Sciatic nerve (tissue), 2 donors: ENCODE measurements at regions of chrX and their contacts with region 1.

Region 1: DNA sequence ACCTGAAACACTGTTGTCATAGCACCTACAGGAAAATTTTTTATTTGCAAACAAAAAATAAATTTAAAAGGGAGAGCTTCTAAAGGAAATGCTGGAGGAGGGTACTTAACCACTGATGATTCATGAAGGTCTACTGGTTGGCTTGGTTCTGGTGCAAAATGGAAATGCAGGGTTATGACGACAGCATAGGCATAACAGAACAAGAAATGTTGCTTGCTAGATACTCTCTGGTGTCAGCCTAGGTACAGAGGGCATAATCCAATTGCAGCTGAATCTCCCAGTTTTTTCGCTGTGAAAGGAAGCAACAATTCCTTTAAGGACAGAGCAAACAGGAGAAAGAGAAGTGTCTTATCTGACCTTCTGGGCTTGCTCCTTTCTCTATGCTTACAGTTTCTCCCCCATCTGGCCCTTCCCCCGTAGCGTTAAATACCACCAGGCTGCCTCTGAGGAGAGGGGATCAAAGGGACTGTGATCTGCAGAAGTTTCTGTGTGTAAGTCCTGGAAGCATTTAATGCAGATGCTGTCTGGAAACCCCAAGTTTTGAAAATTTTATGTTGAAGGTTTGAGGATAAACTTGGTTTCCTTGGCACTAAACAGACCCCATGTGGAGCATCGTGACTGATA is 23.7 kb upstream of the CASK start:
- DNase-seq: no peak
- ATAC-seq: no peak

Region 2: DNA sequence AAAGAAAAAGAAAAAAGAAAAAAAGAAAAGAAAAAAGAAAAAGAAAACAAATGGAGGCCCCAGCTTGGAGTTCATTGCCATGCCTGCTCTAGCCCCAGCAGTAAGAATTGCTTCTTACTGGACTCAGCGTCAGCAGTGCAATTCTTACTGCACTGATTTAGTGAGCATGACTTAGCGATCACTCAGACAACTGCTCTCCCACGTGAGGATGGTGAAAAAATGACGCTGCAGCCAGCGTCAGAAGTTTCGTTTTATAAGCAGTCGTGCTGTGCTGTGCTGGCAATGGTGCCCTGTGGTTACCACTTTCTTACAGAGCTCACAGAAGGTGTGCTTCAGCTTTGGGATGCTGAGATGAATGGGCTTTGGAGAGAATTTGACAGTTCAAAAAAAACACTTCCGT is 681.5 kb before region 1 on chrX:
- intact Hi-C with region 1: no loop called
- DNase-seq: no peak
- ATAC-seq: peak; percentile 69

Region 3: GRCh38 chrX:41824551-41824950 is 122.5 kb before region 1 on chrX:
- intact Hi-C with region 1: no loop called
- DNase-seq: no peak
- ATAC-seq: no peak

Region 4: GRCh38 chrX:41923970-41924683 is 23.0 kb before region 1 on chrX:
- intact Hi-C with region 1: loop called (anchors 1 kb)
- DNase-seq: no peak
- ATAC-seq: peak; percentile 34

Region 5: DNA sequence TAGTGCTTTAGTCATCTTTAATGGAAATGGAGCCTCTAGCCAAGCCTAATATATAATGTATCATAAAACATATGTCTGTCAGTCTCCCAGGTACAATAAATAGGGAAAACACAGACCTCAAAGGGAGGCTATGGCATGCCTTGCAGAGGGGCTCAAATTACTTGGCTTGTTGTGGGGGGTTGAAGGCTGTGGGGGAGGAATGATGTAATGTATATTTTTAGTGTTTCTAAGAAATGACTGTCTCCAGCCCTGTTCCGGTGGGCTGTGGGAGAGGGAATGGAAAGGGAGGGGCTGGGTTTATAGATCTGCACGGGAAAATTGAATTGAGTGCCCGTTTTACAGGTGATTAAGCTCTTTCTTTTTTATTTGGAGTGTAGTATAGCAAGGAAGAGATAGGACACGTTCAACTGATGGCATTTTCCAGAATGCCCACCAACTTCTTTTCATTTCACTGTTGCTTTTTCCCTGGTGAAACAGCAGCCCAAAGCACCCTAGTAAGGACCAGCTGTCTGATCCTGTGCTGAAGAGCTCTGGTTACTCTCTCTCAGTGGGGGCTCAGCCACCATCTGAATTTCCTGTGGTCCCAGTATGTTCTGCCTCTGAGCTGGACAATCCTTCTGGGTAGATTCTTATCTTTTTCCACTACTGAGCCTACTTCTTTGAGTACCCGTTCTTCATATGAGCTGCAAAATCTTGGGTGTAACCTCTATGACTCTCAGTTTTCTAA is 196.9 kb after region 1 on chrX:
- intact Hi-C with region 1: no loop called
- DNase-seq: no peak
- ATAC-seq: no peak

Region 6: DNA sequence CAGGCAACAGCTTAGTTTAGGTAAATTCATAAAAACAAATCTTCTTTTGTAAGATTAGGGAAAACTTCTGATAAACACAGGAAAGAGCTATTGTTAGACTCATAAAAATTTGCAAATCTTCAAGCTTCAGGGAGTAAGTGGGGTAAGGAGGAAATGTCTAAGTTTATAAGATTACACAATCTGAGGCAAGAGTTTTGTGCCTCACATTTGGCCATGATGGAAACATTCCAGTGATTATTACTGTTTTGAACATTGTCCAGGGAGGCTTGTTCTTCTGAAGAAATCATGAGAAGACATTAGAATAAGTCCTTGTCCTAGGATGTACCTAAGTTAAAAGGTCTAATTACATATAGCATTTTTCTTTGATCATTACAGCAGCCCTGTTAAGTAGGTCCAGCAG is 1862.4 kb after region 1 on chrX:
- intact Hi-C with region 1: no loop called
- DNase-seq: no peak
- ATAC-seq: peak; percentile 90